Motor neuron (in vitro differentiated cells): ENCODE measurements at regions of chr14 and their contacts with region 1.

Region 1: DNA sequence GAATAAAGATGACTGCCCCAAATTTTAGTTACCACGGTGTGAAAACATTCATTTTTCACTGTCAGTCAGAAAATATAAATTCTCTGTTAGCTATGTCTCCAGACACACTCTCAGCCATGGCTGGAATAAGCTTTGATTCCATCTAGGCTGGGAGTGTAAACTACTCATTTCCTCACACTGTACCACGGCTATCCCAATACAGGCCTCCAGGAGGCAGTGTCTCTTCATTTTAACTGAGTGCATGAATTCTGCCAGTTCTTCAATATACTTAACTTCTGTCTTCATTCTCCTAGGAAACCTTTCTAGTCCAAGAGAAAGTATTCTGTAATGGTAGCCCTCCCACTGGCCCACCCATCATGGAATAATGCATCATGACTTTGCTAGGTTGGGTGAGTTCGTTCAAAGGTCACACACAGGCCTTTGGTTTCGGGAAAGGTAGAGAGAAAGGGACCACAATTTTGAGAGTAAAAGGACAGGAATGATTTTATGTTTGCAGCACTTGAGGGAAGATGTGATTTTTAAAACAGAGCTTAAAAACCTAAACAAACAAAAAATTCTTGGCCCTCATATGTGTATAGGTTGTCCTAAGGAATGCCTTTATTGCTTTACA is 381.1 kb downstream of the SEC23A start:
- ATAC-seq: peak in 5 of 8 experiments; percentile 29 to 94 (median 88)
- H3K4me3 ChIP-seq: no peak overlapping the region
- H3K27ac ChIP-seq: no peak overlapping the region
- H3K4me1 ChIP-seq: peaks cover 0 to 2% of the 10 kb centered on the region in 2 donors

Region 2: GRCh38 chr14:38851111-38851510 is 129.2 kb after region 1 on chr14:
- in situ Hi-C with region 1: loop called in 1 of 9 experiments (anchors 10 kb)
- ATAC-seq: peak in 2 of 8 experiments; percentile 39 to 57
- H3K4me3 ChIP-seq: no peak overlapping the region
- H3K27ac ChIP-seq: no peak overlapping the region
- H3K4me1 ChIP-seq: peaks cover 3 to 5% of the 10 kb centered on the region in 2 donors